ENCODE measurements at regions of chr13 and their contacts with region 1.

Region 1: DNA sequence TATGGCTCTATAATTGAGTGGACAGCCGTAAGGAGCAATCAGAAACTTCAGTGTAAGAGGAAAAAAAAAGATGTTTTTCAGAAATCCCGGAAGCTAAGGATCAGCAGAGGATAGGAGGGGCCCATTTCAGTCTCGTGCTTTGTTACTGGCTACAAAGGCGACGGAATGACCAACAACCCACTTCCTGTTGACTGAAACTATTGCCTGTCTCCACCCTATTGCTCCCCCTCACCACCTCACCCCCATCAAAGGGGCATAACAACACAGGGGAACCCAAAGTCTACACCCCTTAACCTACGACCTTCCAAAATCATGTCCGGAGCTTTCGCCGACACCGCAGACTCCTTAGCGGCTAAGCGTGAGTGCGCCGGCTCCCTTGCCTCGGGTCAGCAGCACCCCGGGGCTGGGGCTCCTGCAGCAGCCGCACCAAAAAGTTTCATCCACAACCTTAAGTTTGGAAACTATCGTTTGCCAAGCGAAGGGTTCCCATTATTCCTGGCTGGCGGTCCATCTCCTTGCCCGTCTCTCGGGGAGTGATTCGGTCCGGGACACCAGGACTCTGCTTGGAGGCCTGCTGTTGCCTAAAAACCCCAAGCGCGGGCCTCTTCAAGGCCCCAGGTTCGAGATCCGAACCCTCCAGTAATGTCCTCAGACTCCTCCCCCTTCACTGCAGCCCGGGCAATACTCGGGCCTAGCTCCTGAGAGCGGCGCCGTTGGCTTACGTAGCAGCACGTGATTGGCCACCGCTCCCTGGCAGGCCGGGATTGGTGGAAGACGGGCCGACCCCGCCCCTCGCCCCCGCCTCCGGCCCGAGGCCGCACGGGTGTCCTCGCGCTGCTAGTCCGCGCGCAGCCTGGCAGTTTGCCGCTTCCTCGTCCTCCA is at the start of gene TPP2:
- DNase-seq: peak; percentile 98
- H3K4me3 ChIP-seq: peak within 1 kb of the TSS; percentile 94
- H3K27ac ChIP-seq: peak within 1 kb of the TSS; percentile 93
- H3K27me3 ChIP-seq: no peaks in the 10 kb centered on the region
- CTCF ChIP-seq: no peak

Region 2: DNA sequence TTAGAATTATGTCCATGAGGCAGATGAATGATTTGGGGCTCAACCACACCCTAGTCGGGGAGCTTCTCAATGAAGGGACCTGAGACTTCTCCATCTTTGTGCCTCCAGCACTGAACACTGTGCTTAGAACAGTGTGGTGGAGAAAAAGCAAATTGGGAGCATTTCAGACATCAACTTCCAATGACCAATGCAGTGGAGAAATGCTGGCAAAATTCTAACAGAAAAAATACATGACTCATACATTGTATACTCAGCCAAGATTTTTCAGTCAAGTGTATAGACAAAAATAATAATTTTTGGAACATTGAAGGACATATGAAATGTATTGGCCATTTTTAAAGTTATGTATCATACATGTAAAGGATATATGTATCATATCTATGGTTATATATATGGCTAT is 329.2 kb before region 1 on chr13:
- in situ Hi-C with region 1: no loop called
- DNase-seq: no peak
- H3K4me3 ChIP-seq: no peak overlapping the region
- H3K27ac ChIP-seq: no peak overlapping the region
- H3K27me3 ChIP-seq: no peaks in the 10 kb centered on the region
- CTCF ChIP-seq: no peak

Region 3: DNA sequence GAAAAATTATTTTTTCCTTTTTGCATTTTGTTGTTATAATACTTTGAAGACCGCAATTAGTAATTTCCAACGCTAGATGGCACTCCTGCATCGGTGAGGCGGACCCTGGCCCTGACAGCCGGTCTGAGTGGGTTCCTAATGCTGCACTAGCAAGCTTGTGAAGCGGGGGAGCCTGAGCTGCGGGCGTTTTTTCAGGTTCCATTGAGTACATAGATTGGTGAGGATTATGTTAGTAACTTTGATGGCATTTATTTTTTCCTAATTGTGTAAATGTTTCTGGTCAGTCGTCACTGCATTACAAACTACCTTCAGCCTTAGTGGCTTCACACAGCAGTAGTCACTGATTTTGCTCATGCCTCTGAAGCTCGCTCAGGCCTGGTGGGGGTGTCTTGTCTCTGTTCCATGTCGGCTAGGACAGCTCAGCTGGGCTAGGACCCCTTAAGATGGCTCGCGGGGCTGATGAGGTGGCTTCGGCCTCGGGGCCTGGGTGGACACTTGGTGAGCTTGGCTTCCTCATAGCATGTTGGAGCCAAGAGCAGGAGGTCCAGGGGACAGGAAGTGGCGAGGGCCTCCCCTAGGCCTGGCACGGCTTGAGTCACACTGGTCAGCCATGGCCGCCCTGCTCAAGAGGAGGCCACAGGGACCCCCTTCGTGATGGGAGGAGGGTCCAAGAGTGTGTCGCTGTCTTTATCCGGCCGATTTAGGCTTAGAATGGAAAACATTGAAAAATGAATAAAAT is 274.5 kb after region 1 on chr13:
- in situ Hi-C with region 1: loop called (anchors 25 kb)
- DNase-seq: peak; percentile 64
- H3K4me3 ChIP-seq: no peak overlapping the region
- H3K27ac ChIP-seq: no peak overlapping the region
- H3K27me3 ChIP-seq: no peaks in the 10 kb centered on the region
- CTCF ChIP-seq: peak; percentile 80